ENCODE measurements at regions of chrX and their contacts with region 1.

Region 1: GRCh38 chrX:40097497-40098263 is at the start of gene BCOR:
- DNase-seq: peak; percentile 82
- H3K4me3 Mint-ChIP-seq: peak within 1 kb of the TSS; percentile 81
- H3K27ac Mint-ChIP-seq: peak within 1 kb of the TSS; percentile 86
- H3K4me1 Mint-ChIP-seq: peaks cover 22% of the 10 kb centered on the region
- H3K27me3 Mint-ChIP-seq: no peaks in the 10 kb centered on the region
- total RNA-seq, gene BCOR: 33.7 to 35.0 TPM

Region 2: DNA sequence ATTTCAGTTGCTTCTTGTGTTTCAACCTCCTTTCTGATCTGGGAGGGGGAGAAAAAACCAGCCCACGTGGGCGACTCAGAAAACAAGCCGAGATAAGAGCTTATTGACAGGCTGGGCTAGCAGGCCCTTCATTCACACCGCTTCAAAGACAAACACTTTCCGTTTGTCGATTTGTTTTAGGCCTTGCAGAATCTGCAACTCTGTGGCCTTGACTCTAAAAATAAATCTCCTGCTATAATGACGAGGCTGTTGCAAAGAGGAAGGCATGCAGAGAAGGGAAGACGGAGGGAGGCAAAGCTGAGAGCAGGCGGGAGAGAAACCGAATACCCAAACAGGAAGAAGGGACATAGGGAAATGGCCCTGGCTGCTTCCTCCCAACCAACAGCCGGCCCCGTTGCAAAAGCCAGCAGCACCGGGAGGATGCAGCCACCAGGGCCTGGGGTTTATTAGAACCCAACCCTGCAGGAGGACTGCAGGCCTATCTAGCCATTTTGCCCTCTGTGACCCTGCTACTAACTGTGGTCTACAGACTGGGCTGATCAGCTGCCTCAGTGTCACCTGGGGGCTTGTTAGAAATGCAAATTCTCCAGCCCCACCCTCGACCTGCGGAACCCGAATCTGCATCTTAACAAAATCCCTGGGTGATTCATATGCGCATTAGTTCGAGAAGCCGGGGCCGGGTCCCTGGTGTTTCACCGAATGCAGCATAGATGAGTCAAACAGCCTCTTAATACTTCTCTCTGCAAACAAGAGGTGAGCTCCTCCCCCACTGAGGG is 325.4 kb before region 1 on chrX:
- CTCF ChIA-PET with region 1: no interaction called
- POLR2A ChIA-PET with region 1: no interaction called
- intact Hi-C with region 1: loop called (anchors 5 kb)
- DNase-seq: peak; percentile 86
- H3K4me3 Mint-ChIP-seq: peak overlapping the region; percentile 55
- H3K27ac Mint-ChIP-seq: peak overlapping the region; percentile 98
- H3K4me1 Mint-ChIP-seq: peaks cover 48% of the 10 kb centered on the region
- H3K27me3 Mint-ChIP-seq: no peaks in the 10 kb centered on the region

Region 3: DNA sequence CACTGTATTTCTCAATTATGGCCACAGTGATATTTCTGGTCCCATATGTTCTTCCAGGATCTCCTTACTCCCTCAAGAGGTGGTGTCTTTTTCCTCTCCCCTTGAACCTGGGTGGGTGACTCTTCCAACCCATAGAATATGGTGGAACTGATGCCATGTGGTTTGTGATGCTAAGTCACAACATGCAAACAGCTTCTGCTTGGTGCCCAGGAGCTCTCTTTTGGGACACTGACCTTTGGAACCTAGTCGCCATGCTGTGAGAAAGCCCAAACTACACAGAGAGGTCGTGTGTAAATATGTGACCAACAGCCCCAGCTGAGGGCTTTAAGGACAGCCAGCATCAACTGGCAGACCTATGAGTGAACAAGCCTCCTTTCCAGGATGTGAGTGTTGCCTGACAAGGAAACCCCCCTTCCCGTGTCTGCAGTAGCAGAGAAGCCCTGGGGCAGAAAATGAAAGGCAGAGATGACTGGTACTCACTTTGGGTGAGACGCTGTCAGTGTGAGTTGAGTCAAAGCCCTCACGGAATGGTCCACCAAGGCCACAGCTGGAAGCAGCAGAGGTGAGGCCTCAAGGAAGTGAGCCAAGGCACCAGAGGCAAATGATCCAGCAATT is 223.4 kb before region 1 on chrX:
- CTCF ChIA-PET with region 1: no interaction called
- POLR2A ChIA-PET with region 1: no interaction called
- intact Hi-C with region 1: loop called (anchors 5 kb)
- DNase-seq: peak; percentile 88
- H3K4me3 Mint-ChIP-seq: no peak overlapping the region
- H3K27ac Mint-ChIP-seq: peak overlapping the region; percentile 93
- H3K4me1 Mint-ChIP-seq: peaks cover 51% of the 10 kb centered on the region
- H3K27me3 Mint-ChIP-seq: peaks cover 4% of the 10 kb centered on the region

Region 4: GRCh38 chrX:40013266-40014195 is 84.1 kb before region 1 on chrX:
- CTCF ChIA-PET with region 1: no interaction called
- POLR2A ChIA-PET with region 1: interaction called, 12 read pairs
- intact Hi-C with region 1: loop called (anchors 5 kb)
- DNase-seq: peak; percentile 53
- H3K4me3 Mint-ChIP-seq: peak overlapping the region; percentile 71
- H3K27ac Mint-ChIP-seq: peak overlapping the region; percentile 66
- H3K4me1 Mint-ChIP-seq: peaks cover 18% of the 10 kb centered on the region
- H3K27me3 Mint-ChIP-seq: peaks cover 17% of the 10 kb centered on the region

Region 5: GRCh38 chrX:40085102-40085551 is 12.6 kb before region 1 on chrX:
- CTCF ChIA-PET with region 1: no interaction called
- POLR2A ChIA-PET with region 1: interaction called, 3 read pairs
- intact Hi-C with region 1: loop called (anchors 2 kb)
- DNase-seq: no peak
- H3K4me3 Mint-ChIP-seq: no peak overlapping the region
- H3K27ac Mint-ChIP-seq: no peak overlapping the region
- H3K4me1 Mint-ChIP-seq: peaks cover 67% of the 10 kb centered on the region
- H3K27me3 Mint-ChIP-seq: no peaks in the 10 kb centered on the region

Region 6: DNA sequence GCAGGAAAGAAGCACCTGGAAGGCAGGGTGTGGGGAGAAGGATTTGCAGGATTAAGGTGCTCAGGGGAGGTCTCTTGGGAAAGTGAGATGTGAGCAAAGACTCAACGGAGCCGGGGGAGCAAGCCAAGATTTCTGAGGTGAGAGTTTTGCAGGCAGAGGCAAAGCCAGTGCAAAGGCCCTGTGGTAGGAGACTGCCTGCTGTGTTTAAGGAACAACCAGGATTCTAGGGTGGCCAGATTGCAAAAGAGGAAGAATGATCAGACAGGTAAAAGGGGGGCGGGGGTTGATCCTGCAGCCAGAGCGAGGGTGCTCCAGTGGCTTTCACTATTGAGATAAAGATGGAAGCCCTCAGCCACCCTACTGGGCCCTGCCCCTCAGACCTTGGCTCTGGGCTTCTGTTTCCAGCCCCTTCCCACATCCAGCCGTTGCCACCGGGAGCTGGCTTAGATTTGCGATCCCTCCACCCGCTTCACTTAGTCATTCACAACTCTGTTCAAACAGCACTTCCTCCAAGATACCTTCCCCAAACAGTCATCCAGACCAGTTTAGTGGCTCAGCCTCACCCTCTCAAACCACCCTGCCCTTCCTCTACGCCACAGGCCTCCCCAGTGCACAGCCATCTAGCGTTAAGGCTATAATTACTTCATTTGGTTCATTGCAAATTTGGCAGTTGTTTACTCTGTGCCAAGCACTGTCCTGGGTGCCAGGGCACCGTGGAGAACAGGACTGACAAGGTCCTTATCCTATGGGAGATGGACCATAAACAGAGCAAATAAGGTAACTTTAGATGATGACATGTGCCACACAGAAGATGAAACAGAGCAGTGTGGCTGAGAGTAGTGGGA is 23.4 kb after region 1 on chrX:
- CTCF ChIA-PET with region 1: no interaction called
- POLR2A ChIA-PET with region 1: no interaction called
- intact Hi-C with region 1: no loop called
- DNase-seq: no peak
- H3K4me3 Mint-ChIP-seq: no peak overlapping the region
- H3K27ac Mint-ChIP-seq: no peak overlapping the region
- H3K4me1 Mint-ChIP-seq: no peaks in the 10 kb centered on the region
- H3K27me3 Mint-ChIP-seq: no peaks in the 10 kb centered on the region

Region 7: DNA sequence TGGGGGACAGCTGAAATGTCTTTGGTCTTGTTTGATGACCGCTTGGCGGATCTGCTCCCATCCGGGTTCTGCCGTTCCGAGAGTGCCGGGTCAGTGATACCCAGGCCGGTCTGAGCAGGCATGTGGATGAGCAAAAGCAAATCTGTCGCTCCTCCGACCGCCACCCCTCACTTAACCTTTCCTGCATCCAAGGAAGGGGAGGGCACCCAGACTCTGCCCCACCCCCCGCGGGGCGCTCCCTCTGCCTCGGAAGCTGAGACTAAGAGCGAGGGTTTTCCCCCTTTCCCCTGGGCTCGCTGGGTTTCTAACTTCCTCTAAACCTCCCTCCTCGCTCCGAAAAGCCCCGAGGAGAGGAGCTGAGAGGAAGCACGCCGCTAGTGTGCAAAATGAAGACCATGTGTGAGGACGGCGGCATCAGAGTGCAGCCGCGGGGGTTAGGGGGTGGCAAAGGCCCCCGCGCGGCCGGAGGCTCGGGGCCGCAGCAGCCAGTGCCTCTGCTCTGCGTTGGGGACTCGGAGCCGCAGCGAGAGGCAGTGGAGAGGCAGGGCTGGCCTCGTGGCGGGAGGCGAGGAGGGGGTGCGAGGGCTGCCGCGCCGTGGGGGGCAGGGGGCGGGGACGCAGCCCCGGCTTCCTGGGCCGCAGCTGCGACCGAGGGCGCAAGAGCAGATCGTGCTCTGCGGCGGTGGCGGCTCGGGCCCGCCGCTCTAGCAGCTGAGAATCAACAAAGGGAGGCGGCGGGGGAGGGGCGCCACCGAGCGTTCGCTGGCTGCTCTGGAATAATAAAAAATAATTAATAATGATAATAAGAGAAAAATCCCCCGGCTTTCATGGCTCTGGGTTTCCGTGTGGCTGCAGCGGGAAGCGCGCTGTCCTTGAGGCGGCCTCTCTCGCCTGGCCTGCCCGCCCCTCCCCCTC is 55.9 kb after region 1 on chrX:
- CTCF ChIA-PET with region 1: no interaction called
- POLR2A ChIA-PET with region 1: interaction called, 4 read pairs
- intact Hi-C with region 1: loop called (anchors 2 kb)
- DNase-seq: peak; percentile 85
- H3K4me3 Mint-ChIP-seq: peak overlapping the region; percentile 74
- H3K27ac Mint-ChIP-seq: peak overlapping the region; percentile 58
- H3K4me1 Mint-ChIP-seq: peaks cover 7% of the 10 kb centered on the region
- H3K27me3 Mint-ChIP-seq: no peaks in the 10 kb centered on the region

Region 8: DNA sequence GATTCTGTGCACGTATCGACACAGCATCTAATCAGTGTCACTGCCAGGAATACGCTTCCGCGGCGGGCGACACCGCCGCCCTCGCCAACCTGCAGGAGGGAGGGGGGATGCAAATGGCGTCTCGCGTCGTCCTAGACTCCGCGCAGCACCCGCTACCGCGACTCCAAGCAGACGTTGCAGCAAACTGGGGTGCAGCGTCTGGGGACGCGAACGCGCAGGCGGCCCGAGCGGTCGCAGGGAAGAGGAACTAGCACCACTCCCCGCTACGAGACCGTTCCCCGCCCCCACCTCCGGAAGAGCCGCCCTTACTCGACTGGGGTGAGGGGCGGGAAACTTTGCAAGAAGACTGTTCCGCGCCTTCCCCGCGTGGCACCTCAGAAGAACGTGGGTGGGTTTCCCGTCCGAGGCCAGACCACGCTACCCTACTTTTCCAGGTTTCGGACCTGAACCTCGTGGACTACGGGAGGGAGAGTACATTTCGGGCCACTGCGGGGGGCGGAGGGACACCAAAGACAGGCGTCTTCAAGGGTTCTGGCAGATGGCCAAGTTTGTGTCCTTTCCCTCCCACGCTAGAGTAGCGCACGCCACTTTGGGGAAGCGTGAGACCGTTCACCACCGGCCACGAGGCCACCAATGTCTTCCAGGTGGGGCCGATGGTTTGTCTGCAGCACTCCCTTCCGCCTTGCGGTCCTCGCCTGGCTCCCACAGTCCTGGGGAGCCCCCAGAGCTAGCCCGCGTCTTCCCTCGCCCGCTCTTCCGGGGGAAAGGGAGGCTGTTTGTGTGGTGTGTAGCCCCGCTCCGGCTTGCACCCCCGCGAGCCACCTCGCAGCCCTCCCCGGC is 78.1 kb after region 1 on chrX:
- CTCF ChIA-PET with region 1: interaction called, 4 read pairs
- POLR2A ChIA-PET with region 1: interaction called, 14 read pairs
- intact Hi-C with region 1: loop called (anchors 1 kb)
- DNase-seq: peak; percentile 81
- H3K4me3 Mint-ChIP-seq: peak overlapping the region; percentile 90
- H3K27ac Mint-ChIP-seq: peak overlapping the region; percentile 100
- H3K4me1 Mint-ChIP-seq: peaks cover 18% of the 10 kb centered on the region
- H3K27me3 Mint-ChIP-seq: no peaks in the 10 kb centered on the region

Measured in activated CD4-positive, alpha-beta memory T cell treated with anti-CD3 and anti-CD28 coated beads for 36 hours (primary cell).